ENCODE measurements at regions of chr16 and their contacts with region 1.

Region 1: GRCh38 chr16:1971796-1972489 is at the start of gene TBL3:
- DNase-seq: peak; percentile 81 to 97 (median 88)
- ATAC-seq: peak; percentile 97
- H3K4me3 ChIP-seq: peak within 1 kb of the TSS; percentile 100
- H3K27ac ChIP-seq: peak within 1 kb of the TSS; percentile 84
- H3K4me1 ChIP-seq: peaks cover 7 to 68% of the 10 kb centered on the region in 2 experiments; a peak in 4 of 5 replicates
- H3K27me3 ChIP-seq: no peaks in the 10 kb centered on the region
- CTCF ChIP-seq: peak in 2 of 3 experiments; percentile 15 to 24; a peak in 1 of 6 replicates
- EP300 ChIP-seq: peak; percentile 60
- POLR2A ChIP-seq: peak; percentile 87
- RAD21 ChIP-seq: no peak; a peak in 1 of 4 replicates
- polyA plus RNA-seq, gene TBL3: 0.97 to 7.2 TPM

Region 2: DNA sequence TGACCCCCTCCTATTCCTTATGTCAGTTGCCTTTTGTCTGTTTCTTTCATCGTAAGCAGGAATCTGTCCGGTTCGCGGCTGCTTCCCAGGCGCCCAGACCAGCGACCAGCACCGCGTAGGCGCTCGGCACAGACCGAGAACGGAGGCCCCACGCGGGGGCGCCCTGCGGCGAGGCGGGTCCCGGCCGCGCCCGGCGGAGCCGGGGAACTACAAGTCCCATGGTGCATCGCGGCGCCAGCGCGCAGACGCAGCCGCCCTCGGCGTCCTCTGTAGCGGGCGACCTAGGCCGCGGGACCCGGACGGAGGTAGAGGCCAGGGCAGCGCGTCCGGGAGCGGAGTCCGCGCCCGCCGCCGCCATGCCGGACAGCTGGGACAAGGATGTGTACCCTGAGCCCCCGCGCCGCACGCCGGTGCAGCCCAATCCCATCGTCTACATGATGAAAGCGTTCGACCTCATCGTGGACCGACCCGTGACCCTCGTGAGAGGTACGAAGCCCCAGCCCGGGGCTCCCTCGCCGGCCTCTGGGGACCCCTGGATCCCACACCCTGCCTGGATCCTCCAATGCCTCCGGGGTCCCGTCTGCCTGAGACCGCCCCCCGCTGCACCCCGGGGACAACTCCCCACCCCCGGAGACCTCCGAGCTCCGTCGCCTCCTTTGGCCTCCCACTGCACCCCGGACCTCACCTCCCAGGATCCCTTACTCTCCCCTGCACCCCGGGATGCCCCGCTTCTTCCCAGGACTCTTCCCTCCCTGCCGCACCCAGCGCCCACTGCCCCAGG is 12.5 kb before region 1 on chr16 and contains the start of gene NDUFB10:
- CTCF ChIA-PET with region 1: no interaction called
- POLR2A ChIA-PET with region 1: interaction called, 30 read pairs
- in situ Hi-C with region 1: no loop called
- intact Hi-C with region 1: no loop called
- DNase-seq: peak; percentile 87 to 97 (median 90)
- ATAC-seq: peak; percentile 78
- H3K4me3 ChIP-seq: peak within 1 kb of the TSS; percentile 65
- H3K27ac ChIP-seq: peak within 1 kb of the TSS; percentile 83
- H3K4me1 ChIP-seq: peaks cover 8 to 45% of the 10 kb centered on the region in 2 experiments; a peak in 4 of 5 replicates
- H3K27me3 ChIP-seq: no peaks in the 10 kb centered on the region
- CTCF ChIP-seq: peak; percentile 80 to 82 (median 81)
- EP300 ChIP-seq: no peak
- POLR2A ChIP-seq: peak; percentile 85
- RAD21 ChIP-seq: peak; percentile 26 to 51; a peak in 3 of 4 replicates
- polyA plus RNA-seq, gene NDUFB10: 81.5 to 101 TPM

Region 3: GRCh38 chr16:1983544-1984346 is 11.8 kb after region 1 on chr16 and contains the start of gene GFER:
- CTCF ChIA-PET with region 1: no interaction called
- POLR2A ChIA-PET with region 1: interaction called, 103 read pairs
- in situ Hi-C with region 1: no loop called
- intact Hi-C with region 1: no loop called
- DNase-seq: peak; percentile 92 to 98 (median 94)
- ATAC-seq: peak; percentile 94
- H3K4me3 ChIP-seq: peak within 1 kb of the TSS; percentile 70
- H3K27ac ChIP-seq: peak within 1 kb of the TSS; percentile 73
- H3K4me1 ChIP-seq: peaks cover 6 to 72% of the 10 kb centered on the region in 2 experiments; a peak in 4 of 5 replicates
- H3K27me3 ChIP-seq: no peaks in the 10 kb centered on the region
- CTCF ChIP-seq: peak; percentile 46 to 80 (median 73)
- EP300 ChIP-seq: peak; percentile 35; the same call in 1 of the 2 replicates
- POLR2A ChIP-seq: peak; percentile 74
- RAD21 ChIP-seq: peak; percentile 23 to 47; a peak in 2 of 4 replicates
- polyA plus RNA-seq, gene GFER: 4.3 to 5.1 TPM

Region 4: DNA sequence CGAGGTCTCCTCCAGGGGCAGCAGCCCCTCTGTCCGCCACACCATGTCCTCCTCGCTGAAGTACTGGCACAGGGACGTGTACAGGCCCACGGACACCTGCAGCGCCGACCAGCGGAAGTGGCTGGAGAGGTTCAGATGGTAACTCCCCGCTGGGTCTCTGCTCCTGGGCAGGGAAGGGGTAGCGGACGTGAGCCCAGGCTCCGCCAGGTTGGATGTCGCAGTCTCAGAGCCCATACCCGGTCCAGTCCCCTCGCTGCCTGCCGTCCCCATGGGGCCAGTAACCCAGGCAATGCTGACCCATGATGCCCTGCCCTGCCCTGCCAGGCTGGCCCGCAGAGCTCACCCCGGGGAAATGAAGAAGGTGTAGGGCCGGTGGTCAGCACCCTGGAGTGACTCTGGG is 130.5 kb after region 1 on chr16:
- CTCF ChIA-PET with region 1: no interaction called
- POLR2A ChIA-PET with region 1: no interaction called
- in situ Hi-C with region 1: no loop called
- intact Hi-C with region 1: no loop called
- DNase-seq: no peak
- ATAC-seq: no peak
- H3K4me3 ChIP-seq: no peak overlapping the region
- H3K27ac ChIP-seq: no peak overlapping the region
- H3K4me1 ChIP-seq: no peaks in the 10 kb centered on the region
- H3K27me3 ChIP-seq: no peaks in the 10 kb centered on the region
- CTCF ChIP-seq: no peak
- EP300 ChIP-seq: no peak
- POLR2A ChIP-seq: no peak
- RAD21 ChIP-seq: no peak

Region 5: DNA sequence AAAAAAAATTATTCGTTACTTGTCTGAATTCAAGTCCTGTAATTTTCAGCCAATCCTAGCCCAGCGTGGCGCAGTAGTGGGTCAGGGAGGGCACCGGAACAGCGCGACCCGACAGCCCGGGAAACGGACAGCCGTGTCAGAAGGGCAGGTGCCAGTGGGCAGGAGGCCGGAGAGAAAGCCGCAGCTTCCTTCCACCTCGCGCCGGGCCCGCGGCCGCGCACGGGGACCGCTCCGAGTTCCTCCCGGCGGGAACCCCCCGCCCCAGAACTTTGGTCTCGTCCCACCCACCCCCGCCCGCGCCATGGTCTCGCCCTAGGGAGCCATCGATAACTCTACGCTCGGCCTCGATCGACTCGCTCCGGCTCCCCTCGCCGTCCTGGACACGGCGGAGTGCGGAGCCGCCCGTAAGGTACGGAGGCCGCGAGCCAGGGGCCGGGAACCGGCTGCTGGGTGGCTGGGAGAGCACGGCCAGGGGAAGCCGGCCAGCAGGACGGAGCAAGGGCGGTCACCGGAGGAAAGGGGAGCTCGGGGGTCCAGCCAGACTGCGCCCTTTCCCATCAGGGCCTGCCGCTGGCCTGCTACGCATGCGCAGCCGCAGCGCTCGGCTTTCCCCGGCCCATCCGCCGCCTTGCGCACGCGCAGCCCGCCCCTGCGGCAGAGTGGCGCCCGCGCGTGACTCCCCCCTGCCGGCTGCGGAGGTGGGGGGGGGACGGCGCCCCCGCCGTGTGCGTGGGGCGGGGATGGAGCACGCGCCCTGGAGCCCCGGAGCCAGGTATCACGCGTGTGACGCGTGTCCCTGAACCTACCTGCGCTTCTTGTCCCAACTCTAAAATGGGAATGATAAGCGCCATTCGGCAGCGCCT is 233.4 kb after region 1 on chr16 and contains the start of gene MLST8:
- CTCF ChIA-PET with region 1: no interaction called
- POLR2A ChIA-PET with region 1: no interaction called
- in situ Hi-C with region 1: no loop called
- intact Hi-C with region 1: no loop called
- DNase-seq: peak; percentile 92 to 98 (median 96)
- ATAC-seq: peak; percentile 79
- H3K4me3 ChIP-seq: peak within 1 kb of the TSS; percentile 84
- H3K27ac ChIP-seq: peak within 1 kb of the TSS; percentile 93
- H3K4me1 ChIP-seq: peaks cover 13 to 61% of the 10 kb centered on the region in 2 experiments; a peak in 4 of 5 replicates
- H3K27me3 ChIP-seq: no peaks in the 10 kb centered on the region
- CTCF ChIP-seq: 0 out of 6 replicates have a peak, but pooled peaks of 1 of the 3 experiments have one; percentile 15
- EP300 ChIP-seq: no peak
- POLR2A ChIP-seq: peak; percentile 93
- RAD21 ChIP-seq: no peak
- polyA plus RNA-seq, gene MLST8: 1.5 to 9.8 TPM

Measured in K562 (cell line).